PC-3 (cell line): ENCODE measurements at regions of chr1 and their contacts with region 1.

Region 1: GRCh38 chr1:205528887-205529825 is 24.7 kb downstream of the CDK18 start:
- DNase-seq: peak; percentile 92
- ATAC-seq: peak; percentile 94
- H3K4me3 ChIP-seq: peak overlapping the region; percentile 60
- H3K27ac ChIP-seq: no peak overlapping the region
- H3K4me1 ChIP-seq: peaks cover 12% of the 10 kb centered on the region
- H3K27me3 ChIP-seq: no peaks in the 10 kb centered on the region
- CTCF ChIP-seq: peak; percentile 97

Region 2: DNA sequence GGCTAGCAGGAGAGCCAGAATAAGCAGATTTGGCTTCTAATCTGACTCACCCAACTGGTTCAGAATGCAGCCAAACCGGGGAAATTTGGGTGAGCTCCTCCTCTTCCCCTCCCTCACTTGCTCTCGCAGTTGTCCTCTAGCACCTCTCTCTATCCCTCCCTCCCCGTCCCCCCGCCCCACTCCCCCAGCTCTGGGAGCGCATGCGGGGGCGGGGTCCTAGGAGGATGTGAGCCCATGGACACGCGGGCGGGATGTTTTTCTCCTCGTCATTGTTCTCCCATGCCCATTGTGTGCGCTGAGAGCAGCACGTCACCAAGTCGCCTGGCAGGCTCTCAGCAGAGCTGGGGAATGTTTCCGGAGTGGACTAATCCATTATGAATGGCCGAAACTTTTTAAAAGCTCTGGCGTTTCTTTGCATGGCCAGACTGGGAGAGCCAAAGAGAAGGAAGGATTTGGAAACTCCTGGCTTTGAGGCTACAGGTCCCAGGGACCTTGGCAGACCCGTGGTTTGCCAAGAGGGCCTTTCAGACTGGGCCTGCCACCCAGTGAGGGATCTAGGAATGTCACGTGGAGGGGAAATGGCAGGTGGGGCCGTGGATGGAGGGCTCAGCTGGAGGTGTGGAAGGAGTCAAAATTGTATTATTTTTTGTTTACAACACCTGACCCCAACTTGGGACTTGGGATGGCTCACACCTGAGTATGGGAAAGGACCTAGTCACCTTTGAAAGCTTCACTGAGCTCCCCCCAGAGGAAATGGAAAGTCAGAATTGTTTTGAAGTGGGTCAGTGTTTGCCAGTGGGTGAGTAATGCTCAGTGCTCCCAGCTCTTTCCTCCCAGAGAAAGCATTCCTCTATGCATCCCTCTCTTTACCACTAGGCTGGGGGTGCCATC is 14.5 kb after region 1 on chr1:
- CTCF ChIA-PET with region 1: interaction called, 5 read pairs
- POLR2A ChIA-PET with region 1: interaction called, 3 read pairs
- intact Hi-C with region 1: loop called (anchors 2 kb)
- DNase-seq: peak; percentile 99
- ATAC-seq: peak; percentile 86
- H3K4me3 ChIP-seq: peak overlapping the region; percentile 59
- H3K27ac ChIP-seq: peak overlapping the region; percentile 99
- H3K4me1 ChIP-seq: peaks cover 33% of the 10 kb centered on the region
- H3K27me3 ChIP-seq: no peaks in the 10 kb centered on the region
- CTCF ChIP-seq: peak; percentile 37

Region 3: GRCh38 chr1:205568469-205569361 is 39.6 kb after region 1 on chr1:
- CTCF ChIA-PET with region 1: interaction called, 22 read pairs
- POLR2A ChIA-PET with region 1: no interaction called
- intact Hi-C with region 1: loop called (anchors 1 kb)
- DNase-seq: peak; percentile 50
- ATAC-seq: peak; percentile 72
- H3K4me3 ChIP-seq: peak overlapping the region; percentile 67
- H3K27ac ChIP-seq: no peak overlapping the region
- H3K4me1 ChIP-seq: peaks cover 11% of the 10 kb centered on the region
- H3K27me3 ChIP-seq: peaks cover 10% of the 10 kb centered on the region; the same call in 1 of the 2 replicates
- CTCF ChIP-seq: peak; percentile 35

Region 4: DNA sequence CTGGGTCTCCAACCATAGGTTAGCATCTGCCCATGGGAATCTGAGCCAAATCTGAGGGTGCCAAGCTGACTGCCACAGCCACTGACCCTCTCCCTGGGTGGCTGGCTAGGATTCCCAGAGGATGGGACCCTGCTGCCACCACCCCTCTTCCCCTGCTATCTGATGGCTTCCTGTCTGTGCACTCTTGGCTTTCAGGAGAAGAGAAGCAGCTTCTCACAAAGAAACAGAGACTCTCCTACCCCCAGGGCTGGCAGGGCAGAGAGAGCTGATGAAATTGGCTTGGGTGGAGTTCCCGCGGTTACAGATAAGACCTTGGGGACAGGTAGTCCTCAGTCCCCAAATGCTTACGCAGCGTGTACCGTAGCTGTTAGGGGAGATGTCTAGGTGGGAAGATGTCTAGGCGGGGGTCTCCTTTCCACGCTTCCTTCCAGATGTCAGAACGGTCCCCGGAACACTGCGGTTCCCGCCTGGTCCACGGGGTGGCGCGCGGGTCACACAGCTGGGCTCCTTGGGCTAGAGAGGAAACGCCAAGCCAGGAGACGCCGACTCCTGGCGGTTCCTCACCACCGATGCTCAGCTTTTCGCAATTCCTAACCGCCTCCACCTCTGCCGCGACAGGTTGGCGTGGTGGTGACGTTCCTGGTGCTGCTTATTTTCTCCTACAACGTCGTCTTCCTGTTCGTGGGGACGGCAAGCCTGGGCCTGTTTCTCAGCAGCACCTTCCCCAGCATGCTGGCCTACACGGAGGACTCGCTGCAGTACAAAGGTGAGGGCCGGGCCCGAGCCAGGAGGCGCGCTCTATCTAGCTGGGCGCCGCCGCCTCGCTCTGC is 62.6 kb after region 1 on chr1:
- CTCF ChIA-PET with region 1: interaction called, 20 read pairs
- POLR2A ChIA-PET with region 1: no interaction called
- intact Hi-C with region 1: loop called (anchors 1 kb)
- DNase-seq: peak; percentile 91
- ATAC-seq: peak; percentile 84
- H3K4me3 ChIP-seq: peak overlapping the region; percentile 63
- H3K27ac ChIP-seq: no peak overlapping the region
- H3K4me1 ChIP-seq: peaks cover 3% of the 10 kb centered on the region; the same call in 1 of the 2 replicates
- H3K27me3 ChIP-seq: no peaks in the 10 kb centered on the region
- CTCF ChIP-seq: peak; percentile 98

Region 5: DNA sequence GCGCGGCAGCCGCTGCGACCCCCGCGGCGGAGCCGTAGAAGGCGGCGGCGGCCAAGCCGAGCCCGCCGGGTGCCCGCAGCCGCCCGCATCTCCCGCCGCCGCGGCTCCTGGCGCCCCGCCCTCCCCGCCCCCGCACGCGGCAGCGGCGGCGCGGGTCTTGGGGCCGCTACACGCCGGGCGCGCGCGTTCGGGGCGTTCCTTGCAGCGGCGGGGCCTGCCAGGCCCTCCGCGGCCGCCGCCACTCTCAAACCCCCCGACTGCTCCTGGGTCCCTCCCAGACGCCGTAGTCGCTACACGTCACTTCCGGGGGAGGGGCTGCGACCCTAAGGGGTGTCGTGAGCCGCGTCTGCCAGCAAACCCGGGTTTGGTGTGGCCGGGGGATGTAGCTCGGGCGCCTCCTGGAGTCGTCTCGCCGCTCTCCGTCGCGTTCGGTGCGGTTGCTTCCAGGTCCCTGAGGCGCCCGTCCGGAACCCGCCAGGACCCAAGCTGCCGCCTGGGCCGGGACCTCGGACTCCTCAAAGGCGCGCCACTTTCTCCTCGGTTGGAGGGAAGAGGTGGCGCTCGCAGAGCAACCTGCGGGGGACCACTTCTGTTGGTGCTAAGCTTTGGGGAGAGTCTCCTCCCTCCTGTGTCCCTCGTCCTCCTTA is 102.7 kb after region 1 on chr1 and contains the start of gene ELK4:
- CTCF ChIA-PET with region 1: no interaction called
- POLR2A ChIA-PET with region 1: no interaction called
- intact Hi-C with region 1: loop called (anchors 2 kb)
- DNase-seq: peak; percentile 99
- ATAC-seq: peak; percentile 79
- H3K4me3 ChIP-seq: peak within 1 kb of the TSS; percentile 86
- H3K27ac ChIP-seq: peak within 1 kb of the TSS; percentile 76
- H3K4me1 ChIP-seq: peaks cover 24% of the 10 kb centered on the region
- H3K27me3 ChIP-seq: no peaks in the 10 kb centered on the region
- CTCF ChIP-seq: peak; percentile 72
- total RNA-seq, gene ELK4: 16.3 and 16.4 TPM in 2 replicates